ENCODE measurements at regions of chr7 and their contacts with region 1.

Region 1: DNA sequence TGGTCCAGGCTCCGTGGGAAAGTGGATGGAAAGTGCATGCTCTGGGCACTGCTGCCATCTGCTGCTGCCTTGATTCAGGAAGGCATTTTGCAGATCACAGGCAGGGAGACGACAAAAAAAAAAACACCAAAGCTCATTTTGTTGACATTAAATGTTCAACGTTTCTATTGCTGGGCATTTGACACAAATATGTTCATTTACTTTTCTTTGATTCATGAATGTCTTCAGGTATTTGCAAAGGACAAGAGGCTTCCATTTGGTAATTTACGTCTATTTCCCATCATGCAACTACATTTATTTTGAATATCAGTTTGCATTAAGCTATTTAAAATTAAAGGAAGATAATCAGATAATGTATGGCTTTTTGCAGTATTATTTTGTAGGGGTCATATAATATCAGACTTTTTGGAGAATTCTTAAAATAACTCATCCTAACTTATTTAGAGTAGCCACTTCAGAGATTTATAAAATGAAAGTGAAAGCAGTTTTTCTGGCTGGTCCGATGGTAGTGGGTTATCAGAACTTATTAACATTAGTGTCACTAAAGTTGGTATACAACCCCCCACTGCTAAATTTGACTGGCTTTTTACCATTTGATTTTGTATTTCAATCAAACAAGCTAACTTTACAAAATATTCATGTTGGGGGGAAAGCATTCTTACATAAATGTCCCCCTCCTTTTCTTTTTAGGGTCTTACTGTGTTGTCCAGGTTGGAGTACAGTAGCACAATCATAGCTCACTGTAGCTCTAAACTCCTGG is 65.3 kb downstream of the PDIA4 start:
- DNase-seq: peak; percentile 46
- H3K4me3 Mint-ChIP-seq: peak overlapping the region; percentile 85
- H3K27ac Mint-ChIP-seq: peak overlapping the region; percentile 46
- H3K4me1 Mint-ChIP-seq: peaks cover 33% of the 10 kb centered on the region
- H3K27me3 Mint-ChIP-seq: peaks cover 3% of the 10 kb centered on the region

Region 2: DNA sequence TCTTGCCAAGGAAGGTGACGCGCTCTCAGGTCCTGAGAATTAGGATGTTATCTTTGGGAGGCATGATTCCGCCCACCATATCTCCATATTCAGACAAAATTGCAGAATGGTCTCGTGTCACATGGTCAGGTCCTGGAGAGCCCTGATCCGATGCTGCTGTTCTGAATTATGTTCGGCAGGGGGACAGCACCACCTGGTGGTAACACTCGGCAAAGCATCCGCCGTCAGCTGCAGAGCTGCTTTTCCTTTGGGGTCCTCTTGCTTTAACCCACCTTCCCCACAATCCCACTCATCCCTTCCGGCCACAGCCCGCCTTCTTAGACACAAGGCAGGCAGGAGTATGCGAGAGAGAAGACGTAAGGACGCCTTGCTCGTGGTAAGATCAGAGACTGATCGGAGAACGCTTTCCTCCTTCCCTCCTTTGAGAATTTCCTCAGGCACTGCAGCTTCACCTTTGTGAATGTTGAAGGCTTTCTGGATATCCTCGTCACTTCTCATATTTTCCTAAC is 700.2 kb before region 1 on chr7:
- intact Hi-C with region 1: loop called (anchors 2 kb)
- DNase-seq: peak; percentile 22
- H3K4me3 Mint-ChIP-seq: peak overlapping the region; percentile 30
- H3K27ac Mint-ChIP-seq: no peak overlapping the region
- H3K4me1 Mint-ChIP-seq: peaks cover 8% of the 10 kb centered on the region
- H3K27me3 Mint-ChIP-seq: peaks cover 7% of the 10 kb centered on the region

Region 3: DNA sequence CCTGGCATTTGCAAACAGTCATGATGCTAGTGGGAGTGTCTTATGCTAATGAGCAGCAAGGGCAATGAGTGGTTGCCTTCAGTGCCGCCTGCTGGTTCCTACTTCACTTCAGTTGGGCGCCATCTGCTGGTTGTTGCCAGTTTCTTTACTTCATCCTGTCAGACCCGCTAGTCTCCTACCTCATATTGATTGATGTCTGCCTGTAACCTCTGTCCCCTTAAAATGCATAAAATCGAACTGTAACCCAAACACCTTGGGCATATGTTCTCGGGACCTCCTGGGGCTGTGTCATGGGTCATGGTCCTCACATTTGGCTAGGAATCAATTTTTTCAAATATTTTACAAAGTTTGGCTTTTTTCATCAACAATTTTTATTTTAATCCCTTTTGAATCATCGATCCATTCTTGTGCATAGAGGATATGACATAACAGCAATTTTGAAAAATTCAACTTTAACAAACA is 435.3 kb before region 1 on chr7:
- intact Hi-C with region 1: loop called (anchors 1 kb)
- DNase-seq: peak; percentile 78
- H3K4me3 Mint-ChIP-seq: no peak overlapping the region
- H3K27ac Mint-ChIP-seq: peak overlapping the region; percentile 22
- H3K4me1 Mint-ChIP-seq: peaks cover 12% of the 10 kb centered on the region
- H3K27me3 Mint-ChIP-seq: peaks cover 20% of the 10 kb centered on the region

Region 4: GRCh38 chr7:148698397-148699023 is 264.5 kb before region 1 on chr7 and contains the start of gene CUL1:
- intact Hi-C with region 1: loop called (anchors 1 kb)
- DNase-seq: peak; percentile 83
- H3K4me3 Mint-ChIP-seq: peak within 1 kb of the TSS; percentile 99
- H3K27ac Mint-ChIP-seq: peak within 1 kb of the TSS; percentile 97
- H3K4me1 Mint-ChIP-seq: peaks cover 59% of the 10 kb centered on the region
- H3K27me3 Mint-ChIP-seq: peaks cover 3% of the 10 kb centered on the region
- total RNA-seq, gene CUL1: 79.3 and 81.3 TPM in 2 replicates

Region 5: DNA sequence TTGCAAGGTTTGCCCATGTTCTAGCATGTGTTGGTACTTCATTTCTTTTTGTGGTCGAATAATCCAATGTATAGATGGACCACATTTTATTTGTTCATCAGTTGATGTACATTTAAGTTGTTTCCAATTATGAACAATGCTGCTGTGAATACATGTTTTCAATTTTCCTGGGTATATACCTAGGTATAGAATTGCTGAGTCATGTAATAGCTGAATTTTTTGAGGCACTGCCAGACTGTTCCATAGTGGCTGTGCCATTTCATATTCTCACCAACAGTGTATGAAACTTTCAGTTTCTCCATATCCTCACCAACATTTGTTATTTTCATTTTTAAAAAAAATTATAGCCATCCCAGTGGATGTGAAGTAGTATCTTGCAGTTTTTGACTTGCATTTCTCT is 169.4 kb before region 1 on chr7:
- intact Hi-C with region 1: loop called (anchors 5 kb)
- DNase-seq: no peak
- H3K4me3 Mint-ChIP-seq: no peak overlapping the region
- H3K27ac Mint-ChIP-seq: no peak overlapping the region
- H3K4me1 Mint-ChIP-seq: peaks cover 12% of the 10 kb centered on the region
- H3K27me3 Mint-ChIP-seq: no peaks in the 10 kb centered on the region

Region 6: GRCh38 chr7:148828965-148829364 is 134.0 kb before region 1 on chr7:
- intact Hi-C with region 1: no loop called
- DNase-seq: no peak
- H3K4me3 Mint-ChIP-seq: no peak overlapping the region
- H3K27ac Mint-ChIP-seq: no peak overlapping the region
- H3K4me1 Mint-ChIP-seq: peaks cover 32% of the 10 kb centered on the region
- H3K27me3 Mint-ChIP-seq: no peaks in the 10 kb centered on the region

Region 7: DNA sequence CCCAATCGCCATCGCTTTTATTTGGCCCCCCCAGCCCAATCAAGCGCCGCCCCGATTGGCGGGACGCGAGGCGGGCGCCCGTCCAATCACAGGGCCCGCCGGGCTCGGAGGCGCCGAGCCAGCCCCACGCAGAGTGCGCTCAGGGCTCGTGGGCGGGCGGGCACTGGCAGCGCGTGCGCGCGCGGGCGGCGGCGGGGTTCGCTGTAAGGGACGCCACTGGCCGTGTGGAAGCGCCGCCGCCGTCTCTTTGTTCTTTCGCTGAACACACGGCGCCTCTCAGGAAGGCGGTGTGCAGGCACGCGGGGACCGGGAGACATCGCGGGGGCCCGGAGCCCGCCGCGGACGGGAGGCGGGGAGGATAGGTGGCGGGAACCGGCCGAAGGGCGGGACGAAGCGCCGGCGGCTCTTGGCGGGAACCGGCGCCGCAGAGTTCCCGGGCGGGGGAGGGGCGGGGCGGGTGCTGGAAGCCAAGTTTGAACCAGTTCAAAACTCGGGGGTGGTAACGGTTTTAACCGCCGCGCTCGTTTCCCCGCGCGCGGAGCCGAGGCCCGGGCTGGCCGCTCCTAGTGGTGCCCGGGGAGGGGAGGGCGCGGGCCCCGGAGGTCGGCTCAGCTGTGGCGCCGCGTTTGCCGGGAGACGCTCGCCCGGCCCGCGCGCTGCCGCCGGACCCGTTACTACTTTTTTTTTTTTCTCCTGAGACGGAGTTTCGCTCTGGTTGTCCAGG is 78.5 kb before region 1 on chr7:
- intact Hi-C with region 1: loop called (anchors 1 kb)
- DNase-seq: peak; percentile 95
- H3K4me3 Mint-ChIP-seq: peak overlapping the region; percentile 93
- H3K27ac Mint-ChIP-seq: peak overlapping the region; percentile 98
- H3K4me1 Mint-ChIP-seq: peaks cover 43% of the 10 kb centered on the region
- H3K27me3 Mint-ChIP-seq: no peaks in the 10 kb centered on the region

Region 8: DNA sequence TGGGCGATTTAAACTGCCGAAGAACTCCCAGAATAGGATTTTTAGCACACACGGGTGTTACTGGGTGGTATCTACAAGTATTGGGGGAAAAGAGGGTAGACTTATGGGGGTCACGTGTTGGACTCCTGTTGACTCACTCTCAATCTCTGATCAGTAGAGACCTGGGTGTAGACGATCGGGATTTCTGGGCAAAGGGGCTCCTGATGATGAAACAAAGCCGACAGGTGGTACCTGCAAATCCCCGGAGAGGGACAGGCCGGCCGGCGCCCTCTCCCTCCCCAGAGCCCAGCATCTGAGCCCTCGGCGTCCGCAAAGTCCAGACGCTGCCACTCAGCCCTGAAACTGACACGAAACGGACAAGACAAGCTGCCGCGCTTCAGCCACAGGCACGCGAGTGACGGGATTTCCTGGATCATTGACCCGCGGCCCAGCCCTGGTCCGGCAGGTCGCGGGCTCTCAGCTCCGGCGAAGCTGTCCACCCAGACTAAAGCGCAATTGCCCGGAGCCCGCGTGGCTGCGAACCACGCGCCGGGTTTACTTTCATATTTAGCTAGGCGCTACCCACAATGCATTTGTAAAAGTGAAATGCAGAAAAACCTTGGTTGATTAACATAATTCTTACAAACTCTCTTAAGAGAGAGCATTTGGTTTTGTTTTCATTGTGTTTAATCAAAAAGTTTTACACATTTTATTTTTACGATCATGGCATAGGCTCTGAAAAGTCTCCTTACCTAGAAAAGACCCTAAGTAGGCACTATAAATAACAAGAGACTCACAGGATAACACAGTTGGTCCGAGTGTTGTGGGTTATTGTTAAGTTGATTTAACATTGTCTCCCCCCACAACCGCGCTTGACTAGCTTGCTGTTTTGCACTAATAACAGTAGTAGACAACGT is 22.1 kb before region 1 on chr7:
- intact Hi-C with region 1: loop called (anchors 1 kb)
- DNase-seq: peak; percentile 65
- H3K4me3 Mint-ChIP-seq: peak overlapping the region; percentile 96
- H3K27ac Mint-ChIP-seq: peak overlapping the region; percentile 98
- H3K4me1 Mint-ChIP-seq: peaks cover 31% of the 10 kb centered on the region
- H3K27me3 Mint-ChIP-seq: no peaks in the 10 kb centered on the region

Region 9: DNA sequence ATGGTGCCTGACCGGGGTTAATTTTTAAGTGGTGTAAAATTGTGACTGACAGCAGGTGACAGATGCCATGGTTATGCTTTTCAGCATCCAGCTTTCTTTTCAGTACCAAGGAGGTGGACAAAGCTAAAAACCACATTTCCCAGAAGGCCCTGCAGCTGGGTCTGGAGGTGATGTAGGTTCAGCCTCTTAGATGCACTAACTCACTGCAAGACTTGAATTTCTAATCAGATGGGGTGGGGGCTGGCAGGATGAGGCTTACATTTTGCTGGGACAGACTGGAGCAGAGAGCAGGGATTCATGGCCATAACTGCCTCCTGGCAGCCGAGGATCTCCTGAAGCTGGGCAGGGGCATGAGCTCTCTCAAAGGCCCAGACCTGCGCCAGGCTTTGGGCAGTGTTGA is 12.9 kb after region 1 on chr7:
- intact Hi-C with region 1: no loop called
- DNase-seq: no peak
- H3K4me3 Mint-ChIP-seq: no peak overlapping the region
- H3K27ac Mint-ChIP-seq: no peak overlapping the region
- H3K4me1 Mint-ChIP-seq: peaks cover under 1% of the 10 kb centered on the region
- H3K27me3 Mint-ChIP-seq: peaks cover 12% of the 10 kb centered on the region

Region 10: DNA sequence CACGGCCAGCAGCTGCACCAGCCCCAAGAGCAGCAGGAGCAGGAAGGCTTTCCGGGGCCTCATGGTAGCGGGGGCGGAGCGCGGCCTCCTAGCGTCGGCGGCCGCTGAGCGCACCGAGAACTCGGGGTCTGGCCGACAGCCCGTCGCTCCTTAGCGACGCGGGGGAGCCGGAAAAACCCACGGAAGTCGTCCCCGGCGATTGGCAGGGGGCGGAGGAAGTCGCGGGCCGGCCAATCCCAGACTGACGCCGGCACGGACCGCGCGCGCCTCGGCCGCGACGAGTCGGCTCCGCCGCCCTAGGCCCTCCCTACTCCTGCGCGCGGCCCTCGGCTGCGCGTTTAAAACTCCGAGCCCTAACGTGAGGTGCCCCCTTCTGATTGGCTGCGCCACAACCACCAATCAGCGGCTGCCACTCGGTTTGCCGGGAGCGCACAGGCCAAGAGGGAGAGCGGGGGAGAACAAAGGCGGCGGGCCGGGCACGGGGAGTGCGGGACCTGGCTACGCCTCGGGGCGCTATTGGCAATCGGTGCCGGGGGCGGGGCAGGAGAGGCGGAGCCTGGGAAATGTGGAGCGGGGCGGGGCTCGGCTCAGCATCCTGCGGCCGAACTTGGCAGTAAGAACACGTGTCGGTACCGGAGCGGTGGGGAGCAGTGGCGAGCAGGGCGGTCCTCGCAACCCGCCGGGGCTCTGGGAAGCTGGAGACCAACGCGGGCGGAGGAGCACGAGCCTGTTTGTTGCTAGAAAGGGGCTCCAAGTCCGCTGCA is 65.5 kb after region 1 on chr7 and contains the start of gene PDIA4:
- intact Hi-C with region 1: no loop called
- DNase-seq: peak; percentile 100
- H3K4me3 Mint-ChIP-seq: peak within 1 kb of the TSS; percentile 98
- H3K27ac Mint-ChIP-seq: peak within 1 kb of the TSS; percentile 93
- H3K4me1 Mint-ChIP-seq: peaks cover 34% of the 10 kb centered on the region
- H3K27me3 Mint-ChIP-seq: peaks cover 2% of the 10 kb centered on the region
- total RNA-seq, gene PDIA4: 132 and 142 TPM in 2 replicates

Region 11: GRCh38 chr7:149171892-149172533 is 209.0 kb after region 1 on chr7:
- intact Hi-C with region 1: no loop called
- DNase-seq: no peak
- H3K4me3 Mint-ChIP-seq: no peak overlapping the region
- H3K27ac Mint-ChIP-seq: no peak overlapping the region
- H3K4me1 Mint-ChIP-seq: no peaks in the 10 kb centered on the region
- H3K27me3 Mint-ChIP-seq: no peaks in the 10 kb centered on the region